ENCODE measurements at regions of chr9 and their contacts with region 1.

Region 1: DNA sequence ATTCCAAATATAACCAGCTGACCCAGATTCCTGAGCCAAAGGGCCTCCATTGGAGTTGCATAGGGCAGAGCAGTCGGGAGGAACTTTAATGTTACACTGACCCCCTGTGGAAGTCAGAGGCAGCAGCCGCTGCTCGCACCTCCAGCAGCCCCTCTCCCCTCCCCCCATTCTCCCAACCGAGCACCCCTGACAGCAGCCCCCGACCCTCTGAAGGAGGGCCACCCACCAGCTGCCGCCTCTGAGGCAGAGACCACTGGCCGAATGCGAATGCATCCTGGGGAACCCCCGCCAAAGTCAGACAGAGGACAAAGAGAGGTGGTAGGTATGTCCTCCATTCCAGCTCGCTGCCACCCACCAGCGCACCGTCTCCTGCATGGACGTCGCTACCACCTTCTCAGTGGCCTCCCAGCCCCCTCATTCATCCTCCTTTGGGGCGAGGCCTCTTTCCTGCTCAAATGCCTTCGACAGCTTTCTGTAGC is 231.0 kb downstream of the CDK5RAP2 start:
- DNase-seq: peak; percentile 73
- ATAC-seq: peak; percentile 96
- H3K4me3 Mint-ChIP-seq: peak overlapping the region; percentile 33
- H3K27ac Mint-ChIP-seq: no peak overlapping the region
- H3K4me1 Mint-ChIP-seq: peaks cover 9% of the 10 kb centered on the region
- H3K27me3 Mint-ChIP-seq: no peaks in the 10 kb centered on the region; the same call in 1 of the 2 replicates
- CTCF ChIP-seq: peak; percentile 61

Region 2: GRCh38 chr9:119375892-119376291 is 973.1 kb before region 1 on chr9:
- CTCF ChIA-PET with region 1: interaction called, 10 read pairs
- POLR2A ChIA-PET with region 1: no interaction called
- DNase-seq: peak; percentile 61
- ATAC-seq: peak; percentile 81
- H3K4me3 Mint-ChIP-seq: no peak overlapping the region
- H3K27ac Mint-ChIP-seq: no peak overlapping the region
- H3K4me1 Mint-ChIP-seq: peaks cover 14% of the 10 kb centered on the region
- H3K27me3 Mint-ChIP-seq: peaks cover 20% of the 10 kb centered on the region
- CTCF ChIP-seq: peak; percentile 61